ENCODE measurements at regions of chr2 and their contacts with region 1.

Region 1: GRCh38 chr2:155033652-155034051 is 335.2 kb downstream of the KCNJ3 start:
- DNase-seq: no peak
- ATAC-seq: no peak
- H3K4me3 ChIP-seq: no peak overlapping the region
- H3K27ac ChIP-seq: no peak overlapping the region
- H3K4me1 ChIP-seq: no peaks in the 10 kb centered on the region
- H3K27me3 ChIP-seq: no peaks in the 10 kb centered on the region
- CTCF ChIP-seq: no peak
- POLR2A ChIP-seq: no peak
- RAD21 ChIP-seq: no peak

Region 2: DNA sequence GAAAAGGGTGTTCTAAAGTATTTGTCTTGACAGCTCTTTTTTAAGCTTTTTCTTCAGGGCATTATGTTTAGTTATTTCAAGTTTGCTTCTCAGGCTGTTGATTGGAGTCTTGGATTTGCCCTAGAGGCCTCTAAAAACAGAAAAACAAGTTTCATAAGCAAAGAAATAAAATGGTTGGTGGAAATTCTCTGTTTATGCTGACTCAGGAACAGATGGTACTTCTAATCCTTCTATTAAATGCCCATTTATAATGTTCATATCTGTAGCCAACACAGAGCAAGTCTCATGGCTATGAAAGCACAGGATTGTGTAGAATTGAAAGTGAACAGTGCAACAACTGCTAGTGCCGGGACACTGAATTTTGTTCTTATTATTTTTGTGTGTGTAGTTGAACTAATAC is 274.8 kb before region 1 on chr2:
- CTCF ChIA-PET with region 1: no interaction called
- POLR2A ChIA-PET with region 1: no interaction called
- dilution Hi-C with region 1: no loop called
- in situ Hi-C with region 1: no loop called
- intact Hi-C with region 1: loop called (anchors 5 kb)
- DNase-seq: no peak
- ATAC-seq: no peak
- H3K4me3 ChIP-seq: no peak overlapping the region
- H3K27ac ChIP-seq: no peak overlapping the region
- H3K4me1 ChIP-seq: no peaks in the 10 kb centered on the region
- H3K27me3 ChIP-seq: no peaks in the 10 kb centered on the region
- CTCF ChIP-seq: no peak
- POLR2A ChIP-seq: no peak
- RAD21 ChIP-seq: no peak

Region 3: GRCh38 chr2:155141418-155141817 is 107.8 kb after region 1 on chr2:
- CTCF ChIA-PET with region 1: no interaction called
- POLR2A ChIA-PET with region 1: no interaction called
- dilution Hi-C with region 1: no loop called
- in situ Hi-C with region 1: no loop called
- intact Hi-C with region 1: no loop called
- DNase-seq: no peak
- ATAC-seq: no peak
- H3K4me3 ChIP-seq: no peak overlapping the region
- H3K27ac ChIP-seq: no peak overlapping the region
- H3K4me1 ChIP-seq: no peaks in the 10 kb centered on the region
- H3K27me3 ChIP-seq: no peaks in the 10 kb centered on the region
- CTCF ChIP-seq: no peak
- POLR2A ChIP-seq: no peak
- RAD21 ChIP-seq: no peak

Region 4: DNA sequence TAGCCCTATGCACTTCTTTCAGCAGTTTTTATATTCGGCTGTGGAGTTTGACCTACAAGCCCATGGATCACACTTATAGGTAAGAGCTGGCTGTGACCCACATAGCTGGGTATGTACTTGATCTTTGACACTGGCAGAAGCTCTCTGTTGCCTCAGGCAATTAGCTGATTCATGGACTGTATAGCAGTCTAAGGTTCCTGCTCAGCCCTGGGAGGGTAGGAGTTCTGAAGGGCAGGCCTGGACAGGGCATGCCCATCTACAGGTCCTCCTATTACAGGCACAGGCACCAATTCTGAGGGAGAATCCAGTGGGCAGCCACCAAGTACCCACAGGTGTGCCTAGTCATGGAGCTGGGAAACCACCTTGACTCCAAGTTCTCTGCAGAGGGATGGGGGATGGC is 1922.0 kb after region 1 on chr2:
- CTCF ChIA-PET with region 1: no interaction called
- POLR2A ChIA-PET with region 1: no interaction called
- dilution Hi-C with region 1: no loop called
- in situ Hi-C with region 1: no loop called
- intact Hi-C with region 1: no loop called
- DNase-seq: no peak
- ATAC-seq: no peak
- H3K4me3 ChIP-seq: no peak overlapping the region
- H3K27ac ChIP-seq: no peak overlapping the region
- H3K4me1 ChIP-seq: no peaks in the 10 kb centered on the region
- H3K27me3 ChIP-seq: no peaks in the 10 kb centered on the region
- CTCF ChIP-seq: no peak
- POLR2A ChIP-seq: no peak
- RAD21 ChIP-seq: no peak